ENCODE measurements at regions of chr1 and their contacts with region 1.

Region 1: GRCh38 chr1:183915625-183916510 is 110.9 kb downstream of the RGL1 start:
- DNase-seq: no peak
- ATAC-seq: peak; percentile 57
- H3K4me3 Mint-ChIP-seq: no peak overlapping the region
- H3K27ac Mint-ChIP-seq: peak overlapping the region; percentile 0
- H3K4me1 Mint-ChIP-seq: peaks cover 36% of the 10 kb centered on the region
- H3K27me3 Mint-ChIP-seq: no peaks in the 10 kb centered on the region
- CTCF ChIP-seq: peak; percentile 60

Region 2: GRCh38 chr1:183590244-183591191 is 325.4 kb before region 1 on chr1 and contains the start of gene NCF2:
- CTCF ChIA-PET with region 1: no interaction called
- POLR2A ChIA-PET with region 1: interaction called, 8 read pairs
- intact Hi-C with region 1: loop called (anchors 1 kb)
- DNase-seq: peak; percentile 55
- ATAC-seq: peak; percentile 78
- H3K4me3 Mint-ChIP-seq: peak within 1 kb of the TSS; percentile 88
- H3K27ac Mint-ChIP-seq: peak within 1 kb of the TSS; percentile 92
- H3K4me1 Mint-ChIP-seq: peaks cover 73% of the 10 kb centered on the region
- H3K27me3 Mint-ChIP-seq: no peaks in the 10 kb centered on the region
- CTCF ChIP-seq: no peak
- total RNA-seq, gene NCF2: 101 TPM in 2 replicates

Region 3: GRCh38 chr1:183655562-183656075 is 260.2 kb before region 1 on chr1:
- CTCF ChIA-PET with region 1: interaction called, 284 read pairs
- POLR2A ChIA-PET with region 1: interaction called, 25 read pairs
- intact Hi-C with region 1: loop called (anchors 1 kb)
- DNase-seq: peak; percentile 52
- ATAC-seq: peak; percentile 82
- H3K4me3 Mint-ChIP-seq: no peak overlapping the region
- H3K27ac Mint-ChIP-seq: no peak overlapping the region
- H3K4me1 Mint-ChIP-seq: peaks cover 3% of the 10 kb centered on the region
- H3K27me3 Mint-ChIP-seq: peaks cover 4% of the 10 kb centered on the region
- CTCF ChIP-seq: peak; percentile 37

Region 4: DNA sequence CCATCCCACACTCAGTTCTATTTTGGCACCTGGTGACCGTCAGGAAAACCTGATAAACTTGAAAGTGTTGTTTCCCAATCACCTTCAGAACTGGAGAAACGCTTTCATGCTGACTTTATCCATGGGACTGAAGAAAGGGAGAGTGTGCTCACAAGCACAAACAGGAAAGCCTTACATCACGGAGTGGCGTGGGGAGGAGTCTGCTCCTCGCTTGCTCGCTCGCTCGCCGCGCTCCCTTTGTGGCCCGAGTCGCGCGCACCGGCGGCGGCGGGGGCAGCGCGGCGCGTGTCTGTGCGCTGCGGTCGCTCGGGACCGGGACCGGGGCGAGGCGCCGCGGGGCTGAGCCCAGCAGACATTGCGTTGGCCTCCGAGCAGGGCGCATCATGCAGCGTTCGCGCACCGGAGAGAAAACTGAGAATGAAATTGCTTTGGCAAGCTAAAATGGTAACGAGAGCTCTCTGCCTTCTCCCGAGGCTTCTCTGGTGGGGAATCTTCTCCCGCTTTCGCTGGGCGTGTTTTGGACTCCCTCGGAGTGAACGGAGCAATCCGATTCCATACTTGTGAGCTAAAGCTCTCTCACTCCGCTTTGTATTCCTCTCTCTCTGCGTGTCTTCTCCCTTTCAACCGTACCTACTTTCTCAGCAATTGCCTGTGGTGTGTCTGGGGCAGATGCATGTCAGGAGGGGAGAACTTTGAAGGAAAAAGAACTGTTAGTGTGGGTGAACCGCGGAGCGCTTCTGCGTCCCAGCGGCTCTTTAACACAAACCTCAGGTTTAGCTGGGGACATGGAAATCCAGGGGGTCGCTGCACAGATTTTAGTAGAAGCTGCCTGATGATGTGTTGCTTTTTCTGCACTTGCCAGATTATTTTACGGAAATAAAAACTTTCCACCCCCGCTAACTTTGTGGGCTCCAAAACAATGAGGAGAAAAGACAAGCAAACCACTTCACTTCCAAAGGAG is 110.7 kb before region 1 on chr1 and contains the start of gene RGL1:
- CTCF ChIA-PET with region 1: no interaction called
- POLR2A ChIA-PET with region 1: interaction called, 4 read pairs
- intact Hi-C with region 1: loop called (anchors 5 kb)
- DNase-seq: no peak
- ATAC-seq: peak; percentile 52
- H3K4me3 Mint-ChIP-seq: peak within 1 kb of the TSS; percentile 73
- H3K27ac Mint-ChIP-seq: no peak within 1 kb of the TSS
- H3K4me1 Mint-ChIP-seq: peaks cover 5% of the 10 kb centered on the region
- H3K27me3 Mint-ChIP-seq: peaks cover 38% of the 10 kb centered on the region
- CTCF ChIP-seq: no peak
- total RNA-seq, gene RGL1: 3.0 and 3.4 TPM in 2 replicates

Region 5: DNA sequence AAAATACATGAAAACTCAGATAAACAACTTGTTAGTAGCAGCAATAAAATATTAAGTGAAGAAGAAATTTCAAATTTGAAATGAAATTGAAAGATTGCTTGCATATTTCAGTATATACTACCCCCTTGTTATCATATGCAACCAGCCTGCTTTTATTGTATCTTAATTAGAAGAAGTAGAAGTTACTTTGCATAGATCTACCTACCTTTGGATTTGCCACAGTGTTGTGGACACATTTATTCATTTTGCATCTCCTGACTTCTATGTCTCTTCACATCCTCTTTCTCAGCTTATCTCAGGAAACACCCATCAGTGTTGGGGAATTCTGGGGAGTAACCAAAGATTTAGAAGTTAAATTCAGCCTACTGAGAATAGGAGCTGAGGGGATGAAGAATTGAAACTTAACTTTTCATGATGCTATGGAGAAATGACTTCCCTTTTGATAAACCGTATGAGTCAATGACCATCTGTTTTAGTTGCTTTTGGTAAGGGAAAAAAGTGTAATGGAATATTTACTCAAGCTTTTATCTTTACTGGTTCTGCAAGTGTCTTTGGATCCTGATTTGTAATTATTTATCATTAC is 14.0 kb before region 1 on chr1:
- CTCF ChIA-PET with region 1: interaction called, 25 read pairs
- POLR2A ChIA-PET with region 1: interaction called, 23 read pairs
- intact Hi-C with region 1: loop called (anchors 1 kb)
- DNase-seq: no peak
- ATAC-seq: peak; percentile 68
- H3K4me3 Mint-ChIP-seq: peak overlapping the region; percentile 33
- H3K27ac Mint-ChIP-seq: peak overlapping the region; percentile 80
- H3K4me1 Mint-ChIP-seq: peaks cover 38% of the 10 kb centered on the region
- H3K27me3 Mint-ChIP-seq: no peaks in the 10 kb centered on the region
- CTCF ChIP-seq: no peak

Region 6: DNA sequence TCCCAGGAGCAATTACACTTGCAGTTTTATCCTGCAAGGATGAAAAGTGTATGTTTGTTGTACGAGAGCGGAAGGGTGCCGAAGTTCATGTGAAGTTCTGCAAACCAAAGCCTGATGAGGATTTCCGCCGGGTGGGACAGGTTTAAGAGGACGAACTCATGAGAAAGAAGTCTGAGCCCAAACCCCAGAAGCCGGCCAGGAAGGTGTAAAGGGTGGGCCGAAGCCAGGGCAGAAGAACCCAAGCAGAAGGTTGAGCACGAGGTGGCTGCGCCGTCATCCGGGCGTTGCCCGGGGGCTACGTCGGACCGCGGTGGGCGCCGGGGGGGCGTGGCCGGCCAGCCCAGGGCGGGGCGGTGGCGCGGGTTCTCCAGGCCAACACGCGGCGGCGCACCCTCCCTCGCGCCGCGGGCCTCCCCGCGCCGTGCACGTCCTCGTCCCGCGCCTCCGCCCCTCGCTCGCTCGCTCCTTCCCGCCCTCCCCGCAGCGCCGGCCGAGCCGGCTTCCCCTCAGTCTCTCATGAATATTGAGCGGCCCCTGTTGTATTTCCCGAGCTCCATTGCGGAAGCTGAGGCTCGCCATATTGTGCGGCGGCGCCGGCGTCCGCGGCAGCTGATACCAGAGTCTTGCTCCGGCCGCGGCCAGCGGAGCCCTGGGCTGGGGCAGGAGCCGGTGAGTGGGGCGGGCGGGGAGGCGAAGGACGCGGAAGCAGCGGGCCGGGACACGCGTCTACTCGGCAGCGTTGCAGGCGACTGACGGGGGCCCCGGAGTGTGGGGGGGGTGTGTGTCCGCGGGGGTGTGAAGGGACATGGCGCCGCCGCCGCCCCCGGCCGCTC is 1129.3 kb after region 1 on chr1 and contains the start of gene RNF2:
- CTCF ChIA-PET with region 1: no interaction called
- POLR2A ChIA-PET with region 1: interaction called, 10 read pairs
- intact Hi-C with region 1: no loop called
- DNase-seq: peak; percentile 84
- ATAC-seq: peak; percentile 92
- H3K4me3 Mint-ChIP-seq: peak within 1 kb of the TSS; percentile 92
- H3K27ac Mint-ChIP-seq: peak within 1 kb of the TSS; percentile 91
- H3K4me1 Mint-ChIP-seq: peaks cover 31% of the 10 kb centered on the region
- H3K27me3 Mint-ChIP-seq: no peaks in the 10 kb centered on the region
- CTCF ChIP-seq: no peak
- total RNA-seq, gene RNF2: 23.4 and 24.5 TPM in 2 replicates

Measured in activated B cell treated with CpG ODN at 0.5 μM for 24 hours (primary cell).